Endothelial cell of umbilical vein (primary cell): ENCODE measurements at regions of chr6 and their contacts with region 1.

Region 1: DNA sequence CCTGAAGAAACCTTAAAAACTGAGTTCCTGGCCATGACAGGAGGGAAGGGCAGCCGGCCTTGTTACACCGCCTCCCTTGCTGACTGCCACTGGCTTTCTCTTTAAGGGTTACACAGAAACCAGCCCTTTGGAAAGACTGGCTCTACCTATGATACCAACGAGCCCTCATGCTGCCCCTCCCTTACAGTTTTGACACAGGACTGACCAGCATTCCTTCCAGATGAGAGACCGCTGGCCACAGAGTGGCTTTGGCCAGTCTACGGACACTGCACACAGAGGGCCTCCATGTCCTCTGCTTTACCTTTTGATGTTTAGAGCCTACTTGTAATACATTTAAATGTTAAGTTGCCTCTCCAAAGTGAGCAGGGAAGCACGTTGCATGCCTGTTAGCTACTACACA is 243.2 kb upstream of the GMDS start:
- DNase-seq: no peak
- H3K4me3 ChIP-seq: no peak overlapping the region
- H3K27ac ChIP-seq: no peak overlapping the region
- H3K4me1 ChIP-seq: no peaks in the 10 kb centered on the region
- H3K27me3 ChIP-seq: no peaks in the 10 kb centered on the region
- CTCF ChIP-seq: no peak
- POLR2A ChIP-seq: no peak

Region 2: DNA sequence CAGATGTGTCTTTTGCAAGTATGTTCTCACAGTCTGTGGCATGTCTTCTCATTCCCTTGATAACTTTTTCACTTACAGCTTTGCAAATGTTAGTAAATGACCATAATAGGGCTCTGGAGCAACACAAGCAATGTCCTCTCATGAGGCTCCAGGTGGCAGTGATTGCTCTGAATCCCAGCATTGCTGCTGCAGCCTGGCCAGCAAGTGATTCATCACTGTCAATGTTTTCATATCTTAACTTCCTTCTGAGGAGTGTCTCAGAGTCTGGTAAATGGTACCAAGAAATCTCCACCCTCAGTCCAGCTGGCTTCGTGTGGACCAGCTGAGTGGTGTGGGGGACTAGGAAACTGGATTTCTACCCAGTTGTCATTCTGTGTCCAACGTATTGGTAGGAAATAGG is 122.5 kb after region 1 on chr6:
- CTCF ChIA-PET with region 1: no interaction called
- POLR2A ChIA-PET with region 1: no interaction called
- dilution Hi-C with region 1: no loop called
- intact Hi-C with region 1: loop called (anchors 2 kb)
- DNase-seq: peak; percentile 26
- H3K4me3 ChIP-seq: no peak overlapping the region
- H3K27ac ChIP-seq: no peak overlapping the region
- H3K4me1 ChIP-seq: peaks cover 8% of the 10 kb centered on the region
- H3K27me3 ChIP-seq: no peaks in the 10 kb centered on the region
- CTCF ChIP-seq: no peak
- POLR2A ChIP-seq: no peak